Adrenal gland (tissue), 19 donors: ENCODE measurements at regions of chr1 and their contacts with region 1.

Region 1: DNA sequence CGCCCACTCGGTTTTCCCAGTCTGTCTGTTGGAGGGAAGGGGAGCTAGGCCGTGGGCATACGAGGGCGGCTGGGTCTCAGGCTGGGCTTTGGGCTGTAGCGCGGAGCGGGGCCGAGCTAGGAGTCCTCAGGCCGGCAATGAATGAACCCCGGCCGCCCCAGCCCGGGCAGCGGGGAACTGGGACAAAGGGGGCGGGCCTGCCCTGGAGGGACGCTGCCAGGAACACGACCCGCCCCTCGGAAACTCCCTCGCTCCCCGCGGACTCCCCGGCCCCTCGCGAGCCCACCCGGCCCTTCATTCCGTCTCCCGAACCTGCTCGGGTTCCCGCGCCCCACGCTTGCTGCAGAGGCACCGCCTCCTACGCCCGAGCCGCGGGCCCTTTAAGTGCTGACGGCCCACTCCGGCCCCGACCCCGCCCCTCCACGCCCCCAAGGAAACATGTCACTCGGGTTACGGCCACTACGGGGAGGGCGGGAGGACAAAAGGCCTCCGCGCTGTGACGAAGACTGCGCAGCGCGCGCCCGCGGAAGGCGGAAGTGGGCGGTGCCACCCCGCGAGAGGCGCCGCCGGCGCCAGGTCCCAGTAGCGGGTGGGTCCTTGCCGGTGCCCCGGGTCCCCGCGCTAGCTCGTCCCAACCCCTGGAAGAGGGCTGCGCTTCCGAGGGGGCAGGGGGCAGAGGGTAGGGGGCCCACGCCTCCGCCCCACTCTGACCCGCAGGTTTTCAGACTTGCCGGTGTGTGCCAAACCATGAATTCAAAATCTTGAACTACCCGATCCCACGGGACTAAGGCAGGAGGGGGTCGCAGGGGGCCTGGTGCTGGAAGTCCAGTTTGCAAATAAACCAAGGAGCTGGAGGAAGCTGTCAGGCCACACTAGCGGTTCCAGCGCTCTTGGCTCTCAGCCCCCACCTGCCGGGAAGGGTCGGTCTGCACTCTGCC is at the start of gene GALE:
- DNase-seq: peak; percentile 97 to 98 (median 98)
- H3K4me3 ChIP-seq: peak within 1 kb of the TSS; percentile 43 to 78 (median 60)
- H3K27ac ChIP-seq: peak within 1 kb of the TSS; percentile 42 to 88 (median 85)
- H3K4me1 ChIP-seq: peaks cover 11 to 20% of the 10 kb centered on the region in 2 donors
- H3K27me3 ChIP-seq: no peaks in the 10 kb centered on the region
- CTCF ChIP-seq: no peak
- POLR2A ChIP-seq: peak; percentile 25 to 74
- total RNA-seq, gene GALE: 17.8 to 58.5 (median 29.5) TPM

Region 2: DNA sequence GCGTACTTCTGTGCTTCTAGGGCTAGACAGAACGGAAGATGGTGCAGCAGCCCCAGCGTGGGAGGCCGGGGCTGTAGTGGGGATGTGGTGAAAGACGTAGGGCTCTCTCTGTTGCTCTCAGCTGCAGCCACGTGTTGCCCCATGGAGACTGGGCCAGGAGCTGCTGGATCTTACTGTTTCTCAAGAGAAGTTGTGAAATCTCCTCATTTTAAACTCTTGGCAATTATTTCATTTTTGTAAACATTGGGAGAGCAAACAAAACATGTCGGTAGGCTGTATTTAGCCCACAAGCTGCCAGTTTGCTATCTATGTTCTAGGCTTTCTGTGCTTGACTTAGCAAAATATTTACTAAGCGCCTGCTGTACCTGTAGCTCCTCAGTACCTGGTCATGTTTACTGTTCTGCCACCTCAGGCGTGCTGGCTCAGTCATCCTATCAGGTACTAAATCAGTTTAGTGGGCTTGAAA is 73.3 kb before region 1 on chr1:
- intact Hi-C with region 1: no loop called
- DNase-seq: peak in 6 of 7 donors; percentile 54 to 74 (median 64)
- H3K4me3 ChIP-seq: no peak overlapping the region
- H3K27ac ChIP-seq: peak overlapping the region in 2 of 5 donors; percentile 25 to 38
- H3K4me1 ChIP-seq: peaks cover 4 to 16% of the 10 kb centered on the region in 2 donors
- H3K27me3 ChIP-seq: no peaks in the 10 kb centered on the region
- CTCF ChIP-seq: no peak
- POLR2A ChIP-seq: no peak

Region 3: DNA sequence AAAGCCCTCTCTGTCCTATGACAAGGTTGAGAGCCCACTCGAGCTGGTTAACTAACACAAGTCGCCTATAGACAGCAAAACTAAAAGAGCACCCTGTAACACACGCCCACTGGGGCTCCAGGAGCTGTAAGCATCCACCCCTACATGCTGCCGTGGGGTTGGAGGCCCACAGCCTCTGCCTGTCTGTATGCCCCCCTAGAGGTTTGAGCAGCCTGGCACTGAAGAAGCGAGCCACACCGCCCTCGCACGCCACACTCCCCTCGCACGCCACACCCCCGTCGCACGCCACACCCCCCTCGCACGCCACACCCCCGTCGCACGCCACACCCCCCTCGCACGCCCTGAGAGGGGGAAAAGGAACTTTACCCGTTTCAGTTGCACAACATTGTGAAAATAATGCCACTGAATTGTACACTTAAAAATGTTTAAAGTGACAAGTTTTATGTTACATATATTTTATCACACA is 37.8 kb after region 1 on chr1:
- intact Hi-C with region 1: no loop called
- DNase-seq: peak; percentile 44 to 67 (median 62)
- H3K4me3 ChIP-seq: peak overlapping the region in 2 of 4 donors; percentile 2 to 36
- H3K27ac ChIP-seq: no peak overlapping the region
- H3K4me1 ChIP-seq: peaks cover 0 to 4% of the 10 kb centered on the region in 2 donors
- H3K27me3 ChIP-seq: no peaks in the 10 kb centered on the region
- CTCF ChIP-seq: no peak
- POLR2A ChIP-seq: no peak

Region 4: DNA sequence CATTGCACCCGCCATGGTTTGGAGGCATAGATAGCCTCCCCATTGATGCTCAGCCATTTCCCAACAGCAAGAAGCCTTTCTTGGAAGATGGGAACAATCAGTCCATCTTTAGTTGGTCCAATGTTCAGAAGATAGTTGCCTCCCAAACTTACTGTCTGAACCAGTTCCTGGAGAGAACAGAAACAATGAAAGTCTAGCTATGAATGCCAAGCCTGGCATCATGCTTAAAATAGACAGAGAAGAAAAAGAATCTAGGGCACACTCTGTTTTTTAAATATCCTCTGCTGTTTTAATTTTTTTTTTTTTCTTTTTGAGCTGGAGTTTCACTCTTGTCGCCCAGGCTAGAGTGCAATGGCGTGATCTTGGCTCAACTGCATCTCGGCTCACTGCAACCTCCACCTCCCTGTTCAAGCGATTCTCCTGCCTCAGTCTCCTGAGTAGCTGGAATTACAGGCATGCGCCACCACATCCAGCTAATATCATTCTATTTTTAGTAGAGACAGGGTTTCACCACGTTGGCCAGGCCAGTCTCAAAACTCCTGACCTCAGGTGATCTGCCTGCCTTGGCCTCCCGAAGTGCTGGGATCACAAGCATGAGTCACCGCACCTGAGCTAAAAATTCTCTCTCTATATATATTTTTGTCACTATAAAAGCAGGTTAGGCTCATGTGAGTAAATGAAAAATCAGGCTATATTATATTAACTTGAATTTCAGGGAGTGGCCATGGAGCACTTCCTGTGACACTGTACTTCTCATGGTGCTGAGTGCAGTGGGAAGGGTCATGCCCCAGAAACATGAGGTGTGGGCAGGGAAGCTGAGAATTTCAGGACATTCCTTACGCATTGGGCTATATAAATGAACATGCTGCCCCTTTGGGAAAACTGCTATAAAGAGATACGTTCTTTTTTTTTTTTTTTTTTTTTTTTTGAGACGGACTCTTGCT is 48.3 kb after region 1 on chr1:
- intact Hi-C with region 1: no loop called
- DNase-seq: no peak
- H3K4me3 ChIP-seq: no peak overlapping the region
- H3K27ac ChIP-seq: no peak overlapping the region
- H3K4me1 ChIP-seq: no peaks in the 10 kb centered on the region
- H3K27me3 ChIP-seq: no peaks in the 10 kb centered on the region
- CTCF ChIP-seq: no peak
- POLR2A ChIP-seq: no peak

Region 5: DNA sequence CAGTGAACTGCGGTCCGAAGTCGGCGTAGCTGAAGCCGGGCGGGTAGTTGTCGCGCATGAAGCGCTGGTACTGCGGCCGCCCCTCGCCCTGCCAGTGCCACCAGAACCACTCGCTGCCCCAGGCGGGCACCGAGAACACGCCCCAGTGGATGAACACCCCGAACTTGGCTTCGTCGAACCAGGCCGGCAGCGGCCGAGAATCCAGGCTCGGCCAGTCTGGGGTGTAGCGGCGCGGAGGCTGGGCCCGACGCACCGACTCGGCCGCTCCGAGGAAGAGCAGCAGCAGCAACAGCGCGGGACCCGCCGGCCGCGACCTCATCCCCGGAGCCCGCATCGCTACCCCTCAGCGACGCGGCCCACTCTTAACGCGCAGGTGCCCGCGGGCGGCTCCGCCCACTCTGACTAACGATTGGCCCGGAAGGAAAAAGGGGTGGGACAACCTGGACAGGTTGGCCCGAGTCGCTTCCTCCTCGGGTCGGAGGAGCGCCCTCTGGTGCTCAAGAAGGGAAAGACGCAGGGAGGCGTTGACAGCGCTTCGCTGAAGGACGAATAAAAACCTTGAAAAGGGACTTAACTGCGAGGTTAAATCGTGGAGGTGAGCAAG is 67.4 kb after region 1 on chr1 and contains the start of gene FUCA1:
- intact Hi-C with region 1: loop called in 1 of 2 experiments (anchors 10 kb)
- DNase-seq: peak; percentile 91 to 96 (median 94)
- H3K4me3 ChIP-seq: peak within 1 kb of the TSS in 3 of 4 donors; percentile 26 to 98 (median 55)
- H3K27ac ChIP-seq: peak within 1 kb of the TSS in 4 of 5 donors; percentile 14 to 87 (median 61)
- H3K4me1 ChIP-seq: peaks cover 8 to 28% of the 10 kb centered on the region in 2 donors
- H3K27me3 ChIP-seq: no peaks in the 10 kb centered on the region
- CTCF ChIP-seq: peak; percentile 87 to 96 (median 94)
- POLR2A ChIP-seq: peak; percentile 45 to 77
- total RNA-seq, gene FUCA1: 53.6 to 109 (median 74.7) TPM

Region 6: DNA sequence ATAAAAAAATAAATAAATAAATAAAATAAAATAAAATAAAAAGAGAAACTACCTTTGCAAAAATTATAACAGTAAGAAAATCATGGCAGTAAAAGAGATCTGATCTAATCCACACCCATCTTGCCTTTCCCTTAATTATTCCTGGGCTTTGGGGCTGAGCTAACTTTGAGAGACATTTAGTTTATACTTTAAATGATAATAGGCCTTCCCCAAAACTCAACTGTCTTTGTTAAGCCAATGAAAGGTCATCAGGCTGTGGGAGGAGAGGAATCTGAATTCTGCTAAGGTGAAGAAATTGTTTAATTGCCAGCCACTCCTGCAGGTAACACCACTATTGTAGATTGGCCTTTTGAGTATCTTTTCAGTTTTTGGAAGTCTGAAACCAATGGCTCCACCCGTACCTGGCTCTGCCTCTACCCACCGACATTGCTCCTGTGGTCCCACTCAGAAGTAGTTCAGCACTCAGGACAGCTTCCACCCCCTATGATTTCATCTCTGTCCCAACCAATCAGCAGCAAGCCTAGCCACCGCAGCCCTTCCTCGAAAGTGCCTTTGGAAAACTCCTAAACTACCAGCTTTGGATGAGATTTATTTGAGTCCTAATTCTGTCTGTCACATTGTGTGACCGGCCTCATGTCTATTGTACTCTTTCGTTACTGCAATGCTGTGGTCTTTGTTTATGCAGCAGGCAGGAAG is 136.0 kb after region 1 on chr1:
- intact Hi-C with region 1: no loop called
- DNase-seq: no peak
- H3K4me3 ChIP-seq: no peak overlapping the region
- H3K27ac ChIP-seq: no peak overlapping the region
- H3K4me1 ChIP-seq: no peaks in the 10 kb centered on the region
- H3K27me3 ChIP-seq: no peaks in the 10 kb centered on the region
- CTCF ChIP-seq: no peak
- POLR2A ChIP-seq: no peak